ENCODE measurements at regions of chr22 and their contacts with region 1.

Region 1: DNA sequence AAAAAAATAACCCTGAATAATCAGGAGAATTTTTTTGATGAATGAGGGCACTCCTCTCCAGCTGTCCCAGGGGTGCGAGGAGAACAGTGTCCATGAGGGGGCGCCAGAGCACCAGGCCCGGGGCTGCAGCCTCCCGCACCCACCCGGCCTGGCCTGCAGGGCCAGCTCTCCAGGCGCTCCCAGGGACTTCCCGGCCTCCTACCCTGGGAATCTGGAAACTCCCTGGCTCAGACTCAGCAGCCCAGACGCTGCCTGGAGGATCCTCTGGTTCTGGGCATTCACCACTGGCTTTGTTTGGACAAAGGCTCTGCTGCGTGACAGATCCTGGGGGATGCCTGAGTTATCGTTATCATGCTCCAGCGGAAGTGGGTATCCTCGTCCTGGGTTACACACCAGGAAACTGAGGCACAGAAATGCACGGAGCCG is 31.0 kb downstream of the MCM5 start:
- DNase-seq: peak; percentile 90
- H3K4me3 ChIP-seq: no peak overlapping the region
- H3K27ac ChIP-seq: no peak overlapping the region
- H3K4me1 ChIP-seq: peaks cover 5% of the 10 kb centered on the region
- H3K27me3 ChIP-seq: no peaks in the 10 kb centered on the region
- CTCF ChIP-seq: peak; percentile 95 to 97 (median 96)
- POLR2A ChIP-seq: no peak

Region 2: DNA sequence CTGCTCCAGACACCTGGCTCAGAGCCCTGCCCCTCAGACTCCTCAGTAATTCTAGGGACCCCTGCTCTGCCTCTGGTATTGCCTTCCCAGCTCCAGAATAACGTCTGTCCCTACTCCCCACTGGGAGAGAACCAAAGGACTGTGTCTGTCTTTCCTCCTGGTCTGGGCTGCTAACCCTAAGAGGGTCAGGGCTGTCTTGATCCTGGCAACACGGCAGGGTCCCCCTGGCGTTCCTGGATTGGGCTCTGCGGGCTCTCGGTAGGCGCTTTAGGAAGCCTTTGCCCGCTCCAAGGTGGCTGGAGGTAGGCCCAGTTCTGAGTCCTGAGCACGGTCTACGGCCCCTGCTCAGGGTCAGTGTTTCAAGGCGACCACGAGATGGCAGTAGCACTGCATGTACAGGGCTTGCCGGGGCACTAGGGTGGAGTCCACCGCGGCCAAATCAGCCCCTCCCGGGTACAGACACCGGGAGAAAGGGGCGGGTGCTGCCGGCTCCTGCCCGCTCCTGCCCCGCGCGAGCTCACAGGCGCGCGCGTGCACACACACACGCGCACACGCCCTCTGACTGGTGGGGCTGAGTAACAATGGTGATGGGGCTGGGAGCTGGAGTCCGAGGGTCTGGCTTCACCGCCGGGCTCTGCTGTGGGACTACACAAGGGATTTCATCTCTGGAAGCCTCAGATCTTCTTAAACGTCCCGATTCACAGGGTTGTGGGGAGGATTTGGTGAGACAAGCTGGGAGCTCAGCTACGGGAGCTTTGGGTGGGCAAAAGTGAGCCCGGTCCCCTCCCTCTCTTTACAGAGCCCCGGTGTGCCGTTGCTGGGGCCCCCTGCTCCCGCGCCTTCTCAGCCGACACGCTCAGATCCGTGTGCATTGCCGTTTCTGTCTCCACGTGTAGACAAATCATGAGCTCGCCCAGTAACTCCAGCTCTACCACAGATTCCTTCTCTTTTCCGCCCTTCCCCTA is 80.1 kb before region 1 on chr22:
- intact Hi-C with region 1: loop called (anchors 10 kb)
- DNase-seq: peak; percentile 92
- H3K4me3 ChIP-seq: peak overlapping the region; percentile 46 to 62
- H3K27ac ChIP-seq: peak overlapping the region; percentile 79 to 80
- H3K4me1 ChIP-seq: peaks cover 6% of the 10 kb centered on the region
- H3K27me3 ChIP-seq: no peaks in the 10 kb centered on the region
- CTCF ChIP-seq: peak; percentile 91 to 94 (median 93)
- POLR2A ChIP-seq: no peak

Region 3: GRCh38 chr22:35728639-35729308 is 297.9 kb after region 1 on chr22:
- intact Hi-C with region 1: no loop called
- DNase-seq: no peak
- H3K4me3 ChIP-seq: peak overlapping the region in 1 of 2 donors; percentile 21
- H3K27ac ChIP-seq: no peak overlapping the region
- H3K4me1 ChIP-seq: peaks cover 5% of the 10 kb centered on the region
- H3K27me3 ChIP-seq: no peaks in the 10 kb centered on the region
- CTCF ChIP-seq: no peak
- POLR2A ChIP-seq: no peak

Measured in testis (tissue), 5 donors.